Activated B cell treated with CpG ODN at 0.5 μM for 24 hours (primary cell): ENCODE measurements at regions of chr11 and their contacts with region 1.

Region 1: DNA sequence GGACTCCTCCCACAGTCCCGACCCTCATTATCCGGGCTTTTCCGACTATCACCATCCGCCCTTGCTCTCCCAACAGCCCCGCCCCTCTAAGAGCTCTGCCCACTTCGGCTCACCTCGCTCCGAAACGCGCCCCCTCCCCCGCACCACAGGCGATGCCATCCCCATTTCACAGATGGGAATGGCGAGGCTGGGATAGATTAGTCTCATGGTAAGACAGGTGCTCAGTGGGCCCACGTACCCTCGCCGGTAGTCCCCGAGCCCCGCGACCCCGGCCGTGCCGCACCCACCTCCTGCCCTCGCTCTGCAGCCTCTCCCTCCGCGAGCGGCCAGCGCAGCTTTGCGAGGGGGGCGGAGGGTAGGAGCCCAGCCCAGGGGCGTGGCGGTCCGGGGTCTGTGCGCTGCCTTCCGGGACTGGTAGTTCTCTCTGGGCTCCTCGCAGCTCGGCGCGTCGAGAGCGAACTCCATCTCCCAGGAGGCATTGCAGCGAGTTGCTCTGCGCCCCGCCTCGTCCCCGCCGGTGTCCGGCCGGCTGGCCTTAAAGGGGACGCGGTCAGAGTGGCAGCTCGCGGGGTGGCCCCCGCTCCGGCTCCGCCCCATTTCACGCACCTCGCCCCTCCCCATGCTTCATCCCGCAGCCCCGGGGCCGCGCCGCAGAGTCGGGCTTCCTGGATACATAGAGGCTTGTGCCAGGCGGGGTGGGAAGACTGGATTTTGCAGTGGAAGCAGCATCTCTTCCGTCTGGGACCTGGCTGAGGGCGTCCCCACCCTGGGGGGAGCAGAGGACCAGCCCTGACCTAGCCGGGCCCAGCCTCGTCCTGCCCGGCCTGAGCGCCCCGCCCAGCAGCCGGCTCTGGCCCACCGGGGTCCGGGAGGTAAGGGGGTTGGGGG is at the starts of genes KCTD21 and USP35:
- DNase-seq: peak; percentile 92
- ATAC-seq: peak; percentile 95
- H3K4me3 Mint-ChIP-seq: peak within 1 kb of the TSS; percentile 95
- H3K27ac Mint-ChIP-seq: peak within 1 kb of the TSS; percentile 87
- H3K4me1 Mint-ChIP-seq: peaks cover 36% of the 10 kb centered on the region
- H3K27me3 Mint-ChIP-seq: no peaks in the 10 kb centered on the region
- CTCF ChIP-seq: no peak
- total RNA-seq, gene KCTD21: 3.2 and 3.5 TPM in 2 replicates
- total RNA-seq, gene USP35: 3.5 and 4.9 TPM in 2 replicates

Region 2: DNA sequence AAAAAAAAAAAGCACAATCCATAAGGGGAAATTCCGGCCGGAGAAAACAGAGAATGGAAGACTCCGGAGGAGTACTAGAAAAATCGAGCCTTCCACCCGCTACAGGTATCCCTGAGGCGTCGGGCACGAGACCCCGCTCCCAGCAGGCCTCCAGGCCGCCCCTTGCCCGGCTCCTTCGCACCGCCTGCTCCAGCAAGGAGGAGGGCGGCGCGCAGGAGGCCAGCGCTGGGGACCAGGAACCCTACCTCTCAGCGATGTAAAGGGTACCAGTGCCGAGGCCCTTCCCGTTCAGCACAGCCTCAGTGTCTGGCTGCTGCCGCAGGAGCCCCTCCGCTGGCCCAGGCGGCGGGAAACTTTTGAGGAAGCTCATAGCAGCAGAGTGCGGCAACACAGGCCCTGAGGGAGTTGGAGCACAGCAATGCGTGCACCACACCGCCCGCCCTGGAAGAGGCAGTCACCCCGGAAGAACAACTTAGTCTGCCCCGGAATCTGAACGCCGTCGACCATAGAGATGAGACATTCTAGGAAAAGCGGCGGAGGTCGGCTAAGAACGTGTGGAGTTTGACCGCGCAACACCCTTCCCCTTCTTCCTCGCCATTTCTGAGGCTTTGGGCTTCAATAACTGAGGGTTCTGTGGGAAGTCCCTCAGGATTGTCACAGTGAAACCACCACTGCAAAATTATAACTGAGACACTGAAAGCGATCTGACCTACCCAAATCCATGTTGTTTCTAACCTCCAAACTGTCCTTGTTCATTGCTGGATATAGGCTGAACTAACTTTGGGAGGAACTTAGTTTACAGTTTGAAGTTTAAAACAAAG is 551.0 kb before region 1 on chr11 and contains the start of gene CLNS1A:
- CTCF ChIA-PET with region 1: no interaction called
- POLR2A ChIA-PET with region 1: no interaction called
- intact Hi-C with region 1: loop called (anchors 1 kb)
- DNase-seq: peak; percentile 70
- ATAC-seq: peak; percentile 99
- H3K4me3 Mint-ChIP-seq: peak within 1 kb of the TSS; percentile 96
- H3K27ac Mint-ChIP-seq: peak within 1 kb of the TSS; percentile 94
- H3K4me1 Mint-ChIP-seq: peaks cover 41% of the 10 kb centered on the region
- H3K27me3 Mint-ChIP-seq: no peaks in the 10 kb centered on the region
- CTCF ChIP-seq: no peak
- total RNA-seq, gene CLNS1A: 112 and 116 TPM in 2 replicates

Region 3: GRCh38 chr11:77820563-77821348 is 367.8 kb before region 1 on chr11 and contains the starts of genes AAMDC and RSF1:
- CTCF ChIA-PET with region 1: no interaction called
- POLR2A ChIA-PET with region 1: no interaction called
- intact Hi-C with region 1: loop called (anchors 1 kb)
- DNase-seq: peak; percentile 85
- ATAC-seq: peak; percentile 82
- H3K4me3 Mint-ChIP-seq: peak within 1 kb of the TSS; percentile 97
- H3K27ac Mint-ChIP-seq: peak within 1 kb of the TSS; percentile 93
- H3K4me1 Mint-ChIP-seq: peaks cover 36% of the 10 kb centered on the region
- H3K27me3 Mint-ChIP-seq: no peaks in the 10 kb centered on the region
- CTCF ChIP-seq: no peak
- total RNA-seq, gene AAMDC: 3.8 and 4.4 TPM in 2 replicates
- total RNA-seq, gene RSF1: 65.9 and 68.8 TPM in 2 replicates

Region 4: GRCh38 chr11:78079232-78080083 is 109.1 kb before region 1 on chr11 and contains the start of gene NDUFC2:
- CTCF ChIA-PET with region 1: interaction called, 3 read pairs
- POLR2A ChIA-PET with region 1: interaction called, 17 read pairs
- intact Hi-C with region 1: loop called (anchors 1 kb)
- DNase-seq: peak; percentile 60
- ATAC-seq: peak; percentile 79
- H3K4me3 Mint-ChIP-seq: peak within 1 kb of the TSS; percentile 93
- H3K27ac Mint-ChIP-seq: peak within 1 kb of the TSS; percentile 86
- H3K4me1 Mint-ChIP-seq: peaks cover 51% of the 10 kb centered on the region
- H3K27me3 Mint-ChIP-seq: no peaks in the 10 kb centered on the region
- CTCF ChIP-seq: no peak
- total RNA-seq, gene NDUFC2: 83.5 and 88.4 TPM in 2 replicates

Region 5: DNA sequence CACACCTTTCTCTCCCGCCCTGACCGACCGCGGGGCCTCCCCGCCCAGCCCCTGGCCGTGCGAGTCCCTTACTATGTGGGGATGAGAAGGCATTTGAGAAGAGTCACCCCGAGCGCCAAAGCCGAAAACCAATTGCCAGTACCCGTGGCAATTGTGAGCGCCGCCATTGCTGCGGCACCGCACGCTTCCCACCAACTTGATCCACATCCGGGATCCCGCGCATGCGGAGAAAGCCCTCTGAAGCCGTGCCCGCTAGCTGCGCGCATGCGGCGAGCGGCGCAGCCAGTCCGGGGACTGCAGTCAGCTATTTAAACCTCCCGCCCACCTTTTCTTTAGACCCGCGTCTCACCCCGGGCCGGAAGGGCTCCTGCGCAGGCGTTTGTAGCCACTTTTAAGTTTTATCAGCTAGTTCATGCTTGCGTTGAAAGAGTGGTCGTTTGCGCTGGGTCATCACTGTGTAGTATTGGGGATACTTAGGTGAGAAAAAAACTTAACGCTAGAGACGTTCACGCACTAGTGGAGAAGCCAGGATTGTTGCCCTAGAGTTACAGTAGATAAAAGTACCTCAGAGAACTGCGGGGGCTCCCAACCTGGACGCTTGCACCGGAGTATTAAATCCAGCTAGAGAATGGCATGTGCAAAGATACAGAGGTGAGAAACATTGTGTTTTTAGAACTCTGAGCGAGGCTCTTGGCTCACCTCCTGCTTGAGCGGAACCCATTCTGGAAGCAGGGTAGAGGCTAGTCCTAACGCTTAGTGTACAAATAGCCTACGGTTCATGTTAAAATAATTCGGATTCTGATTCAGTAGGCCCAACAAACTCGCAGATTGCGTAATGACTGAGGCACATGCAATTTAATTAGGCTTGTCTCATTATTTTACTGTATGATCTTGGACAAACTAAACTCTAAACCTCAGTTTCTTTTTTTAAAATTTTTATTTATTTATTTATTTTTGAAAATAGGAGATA is 48.8 kb before region 1 on chr11 and contains the start of gene ALG8:
- CTCF ChIA-PET with region 1: no interaction called
- POLR2A ChIA-PET with region 1: interaction called, 25 read pairs
- intact Hi-C with region 1: loop called (anchors 1 kb)
- DNase-seq: peak; percentile 94
- ATAC-seq: peak; percentile 94
- H3K4me3 Mint-ChIP-seq: peak within 1 kb of the TSS; percentile 95
- H3K27ac Mint-ChIP-seq: peak within 1 kb of the TSS; percentile 92
- H3K4me1 Mint-ChIP-seq: peaks cover 49% of the 10 kb centered on the region
- H3K27me3 Mint-ChIP-seq: no peaks in the 10 kb centered on the region
- CTCF ChIP-seq: no peak
- total RNA-seq, gene ALG8: 42.8 and 46.0 TPM in 2 replicates

Region 6: DNA sequence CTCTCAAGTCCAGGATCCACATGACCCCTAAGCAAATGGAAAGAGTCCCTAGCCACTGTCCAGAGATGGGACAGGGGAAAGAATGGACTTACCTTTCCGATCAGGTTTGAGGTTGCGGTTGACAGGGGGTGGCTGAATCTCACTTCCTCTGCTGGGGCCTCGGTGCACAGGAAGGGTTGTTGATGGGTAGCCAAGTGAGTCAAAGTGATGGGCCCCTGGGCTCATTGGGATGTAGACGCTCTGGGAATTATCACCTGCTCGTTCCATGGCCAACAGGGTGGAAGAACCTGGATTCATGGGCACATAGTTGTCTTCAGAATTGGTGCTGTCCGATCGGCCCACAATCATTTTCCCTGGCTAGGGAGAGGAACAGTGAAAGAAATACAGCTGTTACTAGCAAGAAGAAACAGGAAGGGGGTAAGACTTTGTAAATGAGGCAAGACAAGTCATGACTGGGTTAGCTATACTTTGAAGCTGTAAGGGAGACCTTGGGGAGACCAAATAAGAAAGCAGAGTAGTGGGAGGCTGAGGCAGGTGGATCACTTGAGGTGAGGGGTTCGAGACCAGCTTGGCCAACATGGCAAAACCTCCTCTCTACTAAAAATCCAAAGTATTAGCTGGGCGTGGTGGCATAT is 34.9 kb after region 1 on chr11:
- CTCF ChIA-PET with region 1: no interaction called
- POLR2A ChIA-PET with region 1: no interaction called
- intact Hi-C with region 1: loop called (anchors 2 kb)
- DNase-seq: peak; percentile 29
- ATAC-seq: peak; percentile 82
- H3K4me3 Mint-ChIP-seq: peak overlapping the region; percentile 77
- H3K27ac Mint-ChIP-seq: peak overlapping the region; percentile 85
- H3K4me1 Mint-ChIP-seq: peaks cover 45% of the 10 kb centered on the region
- H3K27me3 Mint-ChIP-seq: no peaks in the 10 kb centered on the region
- CTCF ChIP-seq: no peak

Region 7: DNA sequence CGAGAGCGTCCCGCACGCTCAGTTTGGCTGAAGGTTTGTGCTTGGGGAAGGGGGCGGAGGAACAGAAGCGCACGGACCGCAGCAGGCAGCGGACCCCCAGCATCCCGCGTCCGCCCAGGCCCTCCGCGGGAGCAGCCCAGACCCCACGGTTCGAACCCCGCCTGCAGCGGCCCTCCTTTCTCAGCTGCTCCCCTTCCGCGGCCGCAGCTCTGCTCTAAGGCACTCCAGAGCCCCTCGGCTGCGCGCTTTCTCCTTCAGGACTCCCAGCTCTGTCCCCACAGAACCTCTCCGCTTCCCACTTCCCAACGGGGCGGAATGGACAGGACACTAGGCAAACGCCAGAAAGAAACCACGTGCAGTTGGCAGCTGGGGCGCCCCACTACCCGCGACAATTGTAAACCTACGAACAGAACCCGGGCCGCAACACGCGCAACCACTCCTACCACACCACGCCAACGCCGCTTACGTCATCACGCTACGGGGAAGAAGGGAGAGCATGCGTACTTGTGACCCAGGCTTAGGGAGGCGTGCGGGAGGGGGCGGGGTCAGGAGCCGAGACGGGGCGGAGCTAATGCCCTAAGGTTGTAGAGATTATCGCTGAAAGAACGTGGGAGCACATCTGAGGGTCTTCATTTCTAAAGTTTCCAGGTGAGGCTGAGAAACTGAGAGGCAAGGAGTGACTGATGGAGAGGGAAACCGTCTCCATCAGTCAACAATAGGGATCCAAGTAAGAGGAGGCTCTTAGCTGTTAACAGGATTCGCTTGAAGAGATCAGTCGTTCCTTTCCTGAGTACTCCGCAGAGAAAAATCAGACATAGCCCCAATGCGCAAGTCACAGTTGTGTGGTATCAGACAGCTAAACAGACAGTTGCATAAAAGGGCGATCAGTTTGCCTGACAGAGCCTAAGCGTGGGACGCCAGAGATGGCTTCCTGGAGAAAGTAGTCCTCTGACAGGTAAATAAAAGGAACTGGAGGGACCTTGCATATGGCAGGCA is 386.2 kb after region 1 on chr11 and contains the start of gene NARS2:
- CTCF ChIA-PET with region 1: no interaction called
- POLR2A ChIA-PET with region 1: interaction called, 17 read pairs
- intact Hi-C with region 1: loop called (anchors 1 kb)
- DNase-seq: peak; percentile 90
- ATAC-seq: peak; percentile 99
- H3K4me3 Mint-ChIP-seq: peak within 1 kb of the TSS; percentile 93
- H3K27ac Mint-ChIP-seq: peak within 1 kb of the TSS; percentile 94
- H3K4me1 Mint-ChIP-seq: peaks cover 32% of the 10 kb centered on the region
- H3K27me3 Mint-ChIP-seq: no peaks in the 10 kb centered on the region
- CTCF ChIP-seq: no peak
- total RNA-seq, gene NARS2: 16.5 and 18.9 TPM in 2 replicates